Ovary (tissue), 10 donors: ENCODE measurements at regions of chr20 and their contacts with region 1.

Region 1: GRCh38 chr20:48198929-48199451 is 413.7 kb upstream of the SULF2 start:
- DNase-seq: no peak
- H3K4me3 ChIP-seq: no peak overlapping the region
- H3K27ac ChIP-seq: no peak overlapping the region
- H3K4me1 ChIP-seq: peaks cover 4% of the 10 kb centered on the region
- H3K27me3 ChIP-seq: no peaks in the 10 kb centered on the region
- CTCF ChIP-seq: no peak
- EP300 ChIP-seq: peak; percentile 38
- POLR2A ChIP-seq: no peak

Region 2: GRCh38 chr20:46865824-46866223 is 1333.2 kb before region 1 on chr20:
- intact Hi-C with region 1: loop called in 1 of 4 experiments (anchors 5 kb)
- DNase-seq: no peak
- H3K4me3 ChIP-seq: no peak overlapping the region
- H3K27ac ChIP-seq: no peak overlapping the region
- H3K4me1 ChIP-seq: no peaks in the 10 kb centered on the region
- H3K27me3 ChIP-seq: no peaks in the 10 kb centered on the region
- CTCF ChIP-seq: no peak
- EP300 ChIP-seq: no peak
- POLR2A ChIP-seq: no peak